ENCODE measurements at regions of chr14 and their contacts with region 1.

Region 1: GRCh38 chr14:34982417-34983147 is at the start of gene SRP54:
- DNase-seq: peak; percentile 100
- H3K4me3 Mint-ChIP-seq: no peak within 1 kb of the TSS
- H3K27ac Mint-ChIP-seq: no peak within 1 kb of the TSS
- H3K4me1 Mint-ChIP-seq: peaks cover 23% of the 10 kb centered on the region
- H3K27me3 Mint-ChIP-seq: no peaks in the 10 kb centered on the region
- total RNA-seq, gene SRP54: 82.6 to 87.7 TPM

Region 2: DNA sequence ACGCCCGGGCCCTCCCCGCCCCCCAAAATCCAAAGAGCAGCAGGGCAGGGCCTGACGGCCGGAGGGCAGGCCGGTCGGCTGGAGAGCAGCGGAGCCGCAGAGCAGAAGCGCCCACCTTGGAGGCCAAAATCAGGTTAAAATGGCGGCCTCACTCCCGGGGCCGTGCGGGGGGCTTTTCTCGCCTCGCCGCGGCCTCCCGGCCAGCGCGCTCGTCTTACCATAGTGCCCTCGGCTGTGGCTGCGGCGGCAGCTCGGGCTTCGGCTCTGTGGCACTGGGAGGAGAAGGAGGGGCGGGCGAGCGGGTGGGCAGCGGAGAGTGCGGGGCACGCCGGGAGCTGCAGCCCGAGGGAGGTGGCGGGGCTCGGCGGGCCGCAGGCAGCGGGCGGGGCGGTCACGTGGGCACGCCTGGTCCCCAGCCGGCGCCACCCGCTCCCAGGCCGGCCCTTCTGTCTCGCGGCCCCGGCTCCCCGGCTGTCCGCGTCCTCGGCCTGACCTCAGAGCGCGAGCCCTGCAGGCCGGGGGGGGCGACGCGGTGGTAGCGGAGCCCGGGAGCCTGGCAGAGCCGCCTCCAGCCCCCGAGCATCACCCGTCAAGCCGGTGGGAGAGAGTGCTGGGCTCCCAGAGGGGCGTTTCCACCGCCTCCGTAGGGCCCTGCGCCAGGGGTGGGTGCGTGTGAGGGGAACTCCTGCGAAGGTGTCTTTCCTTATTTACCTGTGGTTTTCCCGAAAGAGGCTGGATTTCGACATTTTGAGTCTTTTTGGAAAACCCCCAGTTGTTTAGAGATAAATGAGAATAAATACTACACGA is 268.1 kb before region 1 on chr14 and contains the start of gene CFL2:
- CTCF ChIA-PET with region 1: no interaction called
- POLR2A ChIA-PET with region 1: no interaction called
- intact Hi-C with region 1: loop called (anchors 2 kb)
- DNase-seq: peak; percentile 79
- H3K4me3 Mint-ChIP-seq: peak within 1 kb of the TSS; percentile 94
- H3K27ac Mint-ChIP-seq: peak within 1 kb of the TSS; percentile 89
- H3K4me1 Mint-ChIP-seq: peaks cover 24% of the 10 kb centered on the region
- H3K27me3 Mint-ChIP-seq: peaks cover 1% of the 10 kb centered on the region
- total RNA-seq, gene CFL2: 7.6 to 8.8 TPM

Region 3: GRCh38 chr14:34875031-34875922 is 107.3 kb before region 1 on chr14 and contains the start of gene BAZ1A:
- CTCF ChIA-PET with region 1: interaction called, 5 read pairs
- POLR2A ChIA-PET with region 1: interaction called, 51 read pairs
- intact Hi-C with region 1: loop called (anchors 1 kb)
- DNase-seq: peak; percentile 52
- H3K4me3 Mint-ChIP-seq: peak within 1 kb of the TSS; percentile 100
- H3K27ac Mint-ChIP-seq: peak within 1 kb of the TSS; percentile 98
- H3K4me1 Mint-ChIP-seq: peaks cover 33% of the 10 kb centered on the region
- H3K27me3 Mint-ChIP-seq: no peaks in the 10 kb centered on the region
- total RNA-seq, gene BAZ1A: 67.8 to 68.0 TPM

Region 4: DNA sequence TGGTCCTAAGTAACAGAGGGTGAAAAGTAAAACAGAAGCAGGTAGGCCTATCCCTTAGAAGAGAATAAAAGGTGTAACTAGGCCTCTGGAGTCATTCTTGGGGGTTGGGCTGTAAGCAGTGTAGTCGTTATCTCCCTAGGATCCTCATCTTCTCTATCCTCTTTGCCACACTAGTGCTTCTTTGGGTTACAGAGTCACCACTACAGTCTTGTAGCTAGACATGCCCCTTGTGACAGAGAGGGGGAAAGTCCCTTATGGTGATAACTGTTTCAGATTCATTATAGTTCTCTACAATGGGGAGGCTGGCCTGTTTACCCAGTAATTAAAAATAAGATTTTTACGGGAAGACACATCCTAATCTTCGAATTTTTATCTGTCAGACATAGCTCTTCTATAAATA is 16.2 kb before region 1 on chr14:
- CTCF ChIA-PET with region 1: interaction called, 3 read pairs
- POLR2A ChIA-PET with region 1: interaction called, 3 read pairs
- intact Hi-C with region 1: loop called (anchors 2 kb)
- DNase-seq: no peak
- H3K4me3 Mint-ChIP-seq: no peak overlapping the region
- H3K27ac Mint-ChIP-seq: peak overlapping the region; percentile 61
- H3K4me1 Mint-ChIP-seq: peaks cover 20% of the 10 kb centered on the region
- H3K27me3 Mint-ChIP-seq: no peaks in the 10 kb centered on the region

Region 5: DNA sequence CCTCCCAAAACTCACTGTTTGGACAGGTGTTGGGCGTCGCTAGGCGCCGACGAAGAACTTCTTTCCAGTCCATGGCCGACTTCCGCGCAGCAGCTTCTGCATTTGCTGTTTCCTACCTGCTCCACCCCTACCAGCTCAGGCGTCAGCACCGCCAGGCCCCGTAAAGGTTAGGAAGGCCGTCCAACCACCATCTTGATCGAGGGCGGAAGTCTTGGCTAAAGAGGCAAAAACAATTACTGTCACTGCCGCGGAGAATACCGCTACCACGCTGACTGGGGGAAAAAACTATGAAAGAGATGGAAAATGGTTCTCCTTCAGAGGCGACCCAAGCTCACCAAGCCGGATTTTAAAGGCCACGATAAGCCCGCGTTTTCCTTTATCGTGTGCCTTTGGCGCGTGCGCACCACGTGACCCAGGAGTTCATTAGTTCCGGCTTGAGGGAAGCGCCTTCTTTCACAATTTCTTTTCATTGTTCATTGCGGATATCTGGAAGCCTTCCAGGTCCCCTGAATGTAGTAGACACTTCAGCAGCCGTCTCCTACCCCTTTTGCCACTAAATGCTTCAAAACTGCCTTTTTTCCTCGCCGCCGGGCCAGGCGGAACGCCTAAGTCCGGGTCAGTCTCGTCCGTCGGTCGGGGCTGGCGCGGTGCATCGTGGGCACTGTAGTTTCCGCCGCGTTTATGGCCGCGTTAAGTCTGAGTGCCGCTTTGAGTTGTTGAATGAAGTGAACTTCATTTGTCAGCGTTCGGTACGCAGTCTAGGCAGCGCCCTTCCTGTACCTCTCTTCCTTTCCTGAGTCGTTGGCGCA is 139.5 kb after region 1 on chr14 and contains the starts of genes PPP2R3C and PRORP:
- CTCF ChIA-PET with region 1: no interaction called
- POLR2A ChIA-PET with region 1: interaction called, 8 read pairs
- intact Hi-C with region 1: loop called (anchors 1 kb)
- DNase-seq: peak; percentile 93
- H3K4me3 Mint-ChIP-seq: peak within 1 kb of the TSS; percentile 82
- H3K27ac Mint-ChIP-seq: peak within 1 kb of the TSS; percentile 99
- H3K4me1 Mint-ChIP-seq: peaks cover 55% of the 10 kb centered on the region
- H3K27me3 Mint-ChIP-seq: no peaks in the 10 kb centered on the region
- total RNA-seq, gene PPP2R3C: 48.9 to 51.8 TPM
- total RNA-seq, gene PRORP: 43.4 to 44.6 TPM

Region 6: GRCh38 chr14:36339816-36340215 is 1357.2 kb after region 1 on chr14:
- CTCF ChIA-PET with region 1: no interaction called
- POLR2A ChIA-PET with region 1: no interaction called
- intact Hi-C with region 1: no loop called
- DNase-seq: no peak
- H3K4me3 Mint-ChIP-seq: no peak overlapping the region
- H3K27ac Mint-ChIP-seq: no peak overlapping the region
- H3K4me1 Mint-ChIP-seq: peaks cover 4% of the 10 kb centered on the region
- H3K27me3 Mint-ChIP-seq: peaks cover 29% of the 10 kb centered on the region